Motor neuron (in vitro differentiated cells): ENCODE measurements at regions of chr14 and their contacts with region 1.

Region 1: GRCh38 chr14:88667555-88668273 is 104.9 kb downstream of the ZC3H14 start:
- ATAC-seq: peak; percentile 41 to 93 (median 72)
- H3K4me3 ChIP-seq: no peak overlapping the region
- H3K27ac ChIP-seq: no peak overlapping the region
- H3K4me1 ChIP-seq: no peaks in the 10 kb centered on the region

Region 2: DNA sequence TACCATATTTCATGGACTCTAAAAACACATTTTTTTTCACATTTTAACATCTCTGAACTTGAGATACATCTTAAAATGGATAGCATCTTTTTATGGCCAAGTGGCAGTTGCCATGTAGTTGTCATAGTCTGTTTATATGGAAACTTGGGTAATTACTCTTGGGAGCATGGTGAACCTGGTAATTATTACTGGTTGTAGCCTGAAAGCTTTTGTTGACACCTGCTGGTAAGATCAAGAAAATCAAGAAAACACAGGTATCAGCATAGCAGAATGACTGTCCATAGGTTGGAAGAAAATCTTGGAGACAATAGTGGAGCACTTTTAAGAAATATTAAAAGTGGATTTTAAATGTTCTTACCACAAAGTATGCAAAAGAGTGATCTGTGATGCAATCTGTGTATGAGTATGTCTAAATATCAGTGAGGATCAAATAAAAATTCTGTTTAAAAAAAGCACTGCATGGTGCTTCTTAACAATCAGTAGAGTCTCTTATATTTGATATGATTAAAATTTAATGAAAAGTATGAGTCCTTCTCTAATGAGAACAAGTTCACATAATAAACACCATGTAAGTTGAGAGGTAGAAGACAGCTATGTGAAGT is 200.9 kb after region 1 on chr14:
- in situ Hi-C with region 1: loop called in 1 of 9 experiments (anchors 25 kb)
- ATAC-seq: peak in 3 of 8 experiments; percentile 40 to 55 (median 50)
- H3K4me3 ChIP-seq: no peak overlapping the region
- H3K27ac ChIP-seq: no peak overlapping the region
- H3K4me1 ChIP-seq: no peaks in the 10 kb centered on the region